Activated CD8-positive, alpha-beta T cell treated with anti-CD3 and anti-CD28 coated beads for 36 hours (primary cell): ENCODE measurements at regions of chr3 and their contacts with region 1.

Region 1: GRCh38 chr3:38521391-38521987 is 25.3 kb downstream of the EXOG start:
- DNase-seq: peak; percentile 78
- ATAC-seq: peak; percentile 85
- H3K4me3 Mint-ChIP-seq: no peak overlapping the region
- H3K27ac Mint-ChIP-seq: no peak overlapping the region
- H3K4me1 Mint-ChIP-seq: peaks cover 22% of the 10 kb centered on the region
- H3K27me3 Mint-ChIP-seq: no peaks in the 10 kb centered on the region
- CTCF ChIP-seq: peak; percentile 93

Region 2: GRCh38 chr3:38496131-38496910 is 25.2 kb before region 1 on chr3 and contains the start of gene EXOG:
- CTCF ChIA-PET with region 1: interaction called, 38 read pairs
- POLR2A ChIA-PET with region 1: interaction called, 3 read pairs
- intact Hi-C with region 1: no loop called
- DNase-seq: peak; percentile 93
- ATAC-seq: peak; percentile 95
- H3K4me3 Mint-ChIP-seq: peak within 1 kb of the TSS; percentile 99
- H3K27ac Mint-ChIP-seq: peak within 1 kb of the TSS; percentile 95
- H3K4me1 Mint-ChIP-seq: peaks cover 18% of the 10 kb centered on the region
- H3K27me3 Mint-ChIP-seq: no peaks in the 10 kb centered on the region
- CTCF ChIP-seq: peak; percentile 84
- total RNA-seq, gene EXOG: 16.8 to 17.7 TPM

Region 3: DNA sequence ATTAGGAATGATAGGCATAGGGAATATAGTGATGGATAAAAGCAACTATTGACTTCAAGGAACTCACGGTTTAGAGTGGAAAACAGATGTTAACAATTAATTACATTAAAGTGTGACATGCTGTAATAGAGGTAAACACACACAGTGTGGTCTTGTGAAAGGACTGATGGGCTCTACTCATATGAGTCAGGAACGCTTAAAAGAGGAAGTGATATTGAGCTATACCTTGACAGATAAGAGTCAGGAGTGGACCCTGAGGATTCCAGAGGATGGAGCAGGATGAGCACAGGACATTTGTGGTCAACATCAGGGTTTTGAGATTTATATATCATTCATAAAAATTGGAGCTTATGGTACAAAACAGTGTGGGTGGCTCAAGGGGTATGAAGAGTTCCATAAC is 14.4 kb before region 1 on chr3:
- CTCF ChIA-PET with region 1: interaction called, 80 read pairs
- POLR2A ChIA-PET with region 1: interaction called, 4 read pairs
- intact Hi-C with region 1: no loop called
- DNase-seq: no peak
- ATAC-seq: no peak
- H3K4me3 Mint-ChIP-seq: no peak overlapping the region
- H3K27ac Mint-ChIP-seq: no peak overlapping the region
- H3K4me1 Mint-ChIP-seq: no peaks in the 10 kb centered on the region
- H3K27me3 Mint-ChIP-seq: no peaks in the 10 kb centered on the region
- CTCF ChIP-seq: no peak

Region 4: DNA sequence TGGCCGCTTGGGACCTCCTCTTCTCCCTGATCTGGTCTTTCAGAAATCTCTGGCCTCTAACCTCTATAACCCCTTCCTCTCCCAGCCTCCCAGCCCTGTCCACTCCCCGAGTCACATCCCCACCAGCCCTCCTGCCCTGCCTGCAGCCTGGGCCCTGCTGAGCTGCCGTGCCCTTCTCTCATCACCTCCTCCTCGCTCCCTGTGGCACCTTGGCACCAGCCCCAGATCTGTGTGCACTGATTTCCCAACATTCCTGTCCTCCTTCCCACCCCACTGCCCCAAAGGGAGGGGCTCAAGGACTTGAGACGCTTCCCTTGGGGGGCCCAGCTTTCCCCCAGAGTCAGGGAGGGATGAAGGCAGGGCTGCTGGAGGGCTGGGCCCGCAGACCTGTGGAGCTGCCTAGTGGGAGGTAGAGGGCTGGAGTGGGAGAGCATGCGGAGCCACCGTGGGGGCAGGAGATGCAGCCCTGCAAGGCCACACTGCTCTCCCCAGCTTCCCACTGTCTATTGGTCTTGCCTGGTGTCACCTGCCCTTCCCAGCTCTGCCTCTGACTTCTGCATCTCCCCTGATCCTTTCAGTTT is 17.4 kb after region 1 on chr3:
- CTCF ChIA-PET with region 1: interaction called, 16 read pairs
- POLR2A ChIA-PET with region 1: no interaction called
- intact Hi-C with region 1: no loop called
- DNase-seq: no peak
- ATAC-seq: no peak
- H3K4me3 Mint-ChIP-seq: no peak overlapping the region
- H3K27ac Mint-ChIP-seq: no peak overlapping the region
- H3K4me1 Mint-ChIP-seq: peaks cover 4% of the 10 kb centered on the region
- H3K27me3 Mint-ChIP-seq: no peaks in the 10 kb centered on the region
- CTCF ChIP-seq: no peak

Region 5: DNA sequence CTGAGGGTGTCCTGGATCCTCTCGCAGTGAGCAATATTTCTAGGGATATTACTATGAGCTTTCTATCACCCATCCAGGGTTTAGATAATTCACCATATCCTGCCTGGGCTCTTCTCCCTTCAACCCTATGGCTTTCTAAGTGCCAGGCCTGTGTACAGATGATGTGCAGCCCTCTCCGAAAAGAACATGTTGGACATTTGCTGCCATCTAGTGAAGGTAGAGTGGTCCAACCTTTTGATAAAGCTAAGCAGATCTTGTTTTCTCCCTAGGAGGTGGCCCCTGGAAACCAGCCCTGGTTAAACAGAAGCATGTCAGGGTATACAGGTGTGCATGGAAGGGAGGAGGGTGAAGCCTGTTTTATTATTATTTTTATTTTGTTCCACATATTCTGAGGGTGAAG is 322.4 kb after region 1 on chr3:
- CTCF ChIA-PET with region 1: interaction called, 24 read pairs
- POLR2A ChIA-PET with region 1: no interaction called
- intact Hi-C with region 1: no loop called
- DNase-seq: peak; percentile 26
- ATAC-seq: peak; percentile 64
- H3K4me3 Mint-ChIP-seq: no peak overlapping the region
- H3K27ac Mint-ChIP-seq: no peak overlapping the region
- H3K4me1 Mint-ChIP-seq: no peaks in the 10 kb centered on the region
- H3K27me3 Mint-ChIP-seq: peaks cover 19% of the 10 kb centered on the region
- CTCF ChIP-seq: peak; percentile 46